Common myeloid progenitor, CD34-positive (primary cell): ENCODE measurements at regions of chr13 and their contacts with region 1.

Region 1: DNA sequence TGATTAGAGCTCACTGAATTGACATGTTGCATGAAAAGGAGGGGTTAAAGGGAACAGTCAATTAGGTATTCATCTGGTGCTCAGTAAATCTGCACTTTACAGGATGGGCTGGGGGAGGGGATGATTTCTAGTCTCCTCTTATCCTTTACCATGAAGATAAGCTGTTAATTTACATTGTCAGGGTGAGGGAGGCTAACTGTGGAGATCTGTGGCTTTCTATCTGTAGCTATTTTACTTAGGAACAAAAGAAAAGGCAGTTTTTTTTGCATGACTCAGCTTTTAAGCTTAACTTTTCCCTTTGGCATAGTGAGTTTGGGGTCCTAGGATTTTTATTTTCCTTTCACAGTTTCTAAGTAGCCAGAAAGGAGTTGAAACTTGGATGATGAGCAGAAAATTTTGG is 253.3 kb downstream of the LMO7 start:
- DNase-seq: no peak
- H3K4me3 ChIP-seq: no peak overlapping the region
- H3K27ac ChIP-seq: no peak overlapping the region
- H3K4me1 ChIP-seq: no peaks in the 10 kb centered on the region
- H3K27me3 ChIP-seq: no peaks in the 10 kb centered on the region

Region 2: DNA sequence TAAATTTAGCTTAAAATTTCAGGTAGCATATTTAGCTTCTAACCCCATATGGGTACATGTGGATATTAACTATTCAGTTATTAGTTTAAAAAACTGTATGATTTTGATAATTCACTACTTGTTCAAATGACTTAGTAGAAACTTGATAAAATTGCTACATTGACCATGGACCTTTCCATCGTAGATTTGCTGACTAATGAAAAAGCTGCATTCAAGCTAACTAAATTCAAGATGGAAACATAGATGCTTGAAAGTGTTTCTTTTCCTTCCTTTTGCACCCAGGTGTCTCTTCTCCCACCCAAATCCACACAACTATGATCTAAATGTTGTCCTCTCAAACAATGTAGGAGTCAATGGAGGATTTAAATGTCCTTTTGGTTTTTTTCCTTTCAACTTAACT is 846.6 kb before region 1 on chr13:
- CTCF ChIA-PET with region 1: no interaction called
- POLR2A ChIA-PET with region 1: no interaction called
- DNase-seq: no peak
- H3K4me3 ChIP-seq: no peak overlapping the region
- H3K27ac ChIP-seq: no peak overlapping the region
- H3K4me1 ChIP-seq: no peaks in the 10 kb centered on the region
- H3K27me3 ChIP-seq: no peaks in the 10 kb centered on the region

Region 3: GRCh38 chr13:75876360-75877050 is 12.9 kb before region 1 on chr13:
- CTCF ChIA-PET with region 1: interaction called, 39 read pairs
- POLR2A ChIA-PET with region 1: no interaction called
- DNase-seq: peak; percentile 72 to 83 (median 80)
- H3K4me3 ChIP-seq: peak overlapping the region in 1 of 7 experiments; percentile 31
- H3K27ac ChIP-seq: no peak overlapping the region
- H3K4me1 ChIP-seq: peaks cover 0 to 15% (median 3%) of the 10 kb centered on the region in 4 experiments
- H3K27me3 ChIP-seq: no peaks in the 10 kb centered on the region

Region 4: GRCh38 chr13:75910591-75910990 is 21.2 kb after region 1 on chr13:
- CTCF ChIA-PET with region 1: no interaction called
- POLR2A ChIA-PET with region 1: no interaction called
- DNase-seq: no peak
- H3K4me3 ChIP-seq: no peak overlapping the region
- H3K27ac ChIP-seq: no peak overlapping the region
- H3K4me1 ChIP-seq: no peaks in the 10 kb centered on the region
- H3K27me3 ChIP-seq: no peaks in the 10 kb centered on the region